Upper lobe of right lung (tissue), 1 donor: ENCODE measurements at regions of chr4 and their contacts with region 1.

Region 1: GRCh38 chr4:88818631-88819470 is 121.2 kb upstream of the NAP1L5 start:
- DNase-seq: no peak
- ATAC-seq: peak; percentile 45
- H3K4me3 ChIP-seq: no peak overlapping the region
- H3K27ac ChIP-seq: no peak overlapping the region
- H3K4me1 ChIP-seq: peaks cover 25% of the 10 kb centered on the region
- H3K27me3 ChIP-seq: no peaks in the 10 kb centered on the region
- CTCF ChIP-seq: peak; percentile 60

Region 2: DNA sequence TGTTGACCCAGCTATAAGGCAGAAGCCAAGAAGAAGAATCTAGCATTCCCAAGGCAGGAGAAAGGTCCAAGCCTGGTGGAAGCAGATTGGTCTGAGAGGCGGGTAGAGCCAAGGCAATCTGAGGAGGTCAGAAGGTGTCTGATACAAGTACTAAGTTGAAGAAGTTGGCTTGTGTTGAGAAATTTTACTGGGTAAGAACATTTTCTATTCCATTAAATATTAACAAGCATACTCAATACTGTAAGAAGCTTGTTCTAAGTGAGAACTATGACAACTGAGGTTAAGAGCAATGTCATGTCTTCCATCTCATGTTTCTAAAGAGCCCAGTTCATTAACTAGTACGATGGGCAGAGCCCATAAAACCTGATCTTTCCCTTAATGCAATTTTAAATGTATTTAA is 163.1 kb after region 1 on chr4:
- intact Hi-C with region 1: no loop called
- DNase-seq: no peak
- ATAC-seq: no peak
- H3K4me3 ChIP-seq: no peak overlapping the region
- H3K27ac ChIP-seq: no peak overlapping the region
- H3K4me1 ChIP-seq: no peaks in the 10 kb centered on the region
- H3K27me3 ChIP-seq: no peaks in the 10 kb centered on the region
- CTCF ChIP-seq: no peak

Region 3: DNA sequence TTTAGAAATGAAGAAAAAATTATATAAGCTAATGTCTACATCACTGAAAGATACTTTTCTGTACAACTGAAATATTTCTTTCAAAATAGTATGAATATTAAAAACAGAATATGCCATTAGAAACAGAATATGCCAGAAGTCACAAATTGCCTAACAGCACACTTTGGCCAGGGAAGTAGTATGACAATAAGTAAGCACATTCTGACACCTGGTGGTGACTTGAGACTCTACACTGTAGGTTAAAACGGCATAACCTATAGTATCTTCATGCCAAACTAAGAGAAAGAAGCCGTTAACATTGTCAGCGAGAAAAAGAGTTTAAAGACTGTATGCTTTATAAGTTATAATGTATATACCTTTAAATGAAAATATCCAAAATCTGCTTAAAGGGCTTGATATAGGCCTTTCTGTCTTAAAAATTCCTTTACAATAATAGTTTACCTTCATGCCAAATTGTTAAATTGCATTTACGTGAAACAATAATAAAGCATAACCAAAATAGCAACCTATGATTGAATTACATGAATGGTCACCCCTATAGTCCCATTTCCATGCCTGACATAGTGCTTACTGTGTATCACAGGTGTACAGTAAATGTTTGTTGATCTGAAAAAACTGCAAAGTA is 205.3 kb after region 1 on chr4:
- intact Hi-C with region 1: loop called (anchors 5 kb)
- DNase-seq: no peak
- ATAC-seq: peak; percentile 99
- H3K4me3 ChIP-seq: no peak overlapping the region
- H3K27ac ChIP-seq: no peak overlapping the region
- H3K4me1 ChIP-seq: no peaks in the 10 kb centered on the region
- H3K27me3 ChIP-seq: no peaks in the 10 kb centered on the region
- CTCF ChIP-seq: peak; percentile 86